ENCODE measurements at regions of chr1 and their contacts with region 1.

Region 1: GRCh38 chr1:150281837-150282653 is at the start of gene CIART:
- DNase-seq: peak; percentile 99
- H3K4me3 ChIP-seq: peak within 1 kb of the TSS; percentile 43
- H3K27ac ChIP-seq: peak within 1 kb of the TSS; percentile 21
- H3K4me1 ChIP-seq: peaks cover 19% of the 10 kb centered on the region
- H3K27me3 ChIP-seq: no peaks in the 10 kb centered on the region
- CTCF ChIP-seq: no peak
- total RNA-seq, gene CIART: 3.5 and 4.9 TPM in 2 replicates

Region 2: GRCh38 chr1:150293433-150294168 is 11.6 kb after region 1 on chr1 and contains the start of gene MRPS21:
- CTCF ChIA-PET with region 1: no interaction called
- POLR2A ChIA-PET with region 1: no interaction called
- intact Hi-C with region 1: loop called (anchors 1 kb)
- DNase-seq: peak; percentile 96
- H3K4me3 ChIP-seq: peak within 1 kb of the TSS; percentile 68
- H3K27ac ChIP-seq: peak within 1 kb of the TSS; percentile 62
- H3K4me1 ChIP-seq: peaks cover 20% of the 10 kb centered on the region
- H3K27me3 ChIP-seq: no peaks in the 10 kb centered on the region
- CTCF ChIP-seq: no peak
- total RNA-seq, gene MRPS21: 88.5 and 96.3 TPM in 2 replicates